ENCODE measurements at regions of chr3 and their contacts with region 1.

Region 1: GRCh38 chr3:107429320-107430181 is 52.3 kb downstream of the CCDC54 start:
- DNase-seq: peak; percentile 87
- H3K4me3 Mint-ChIP-seq: peak overlapping the region; percentile 82
- H3K27ac Mint-ChIP-seq: peak overlapping the region; percentile 45
- H3K4me1 Mint-ChIP-seq: peaks cover 14% of the 10 kb centered on the region
- H3K27me3 Mint-ChIP-seq: peaks cover 51% of the 10 kb centered on the region

Region 2: DNA sequence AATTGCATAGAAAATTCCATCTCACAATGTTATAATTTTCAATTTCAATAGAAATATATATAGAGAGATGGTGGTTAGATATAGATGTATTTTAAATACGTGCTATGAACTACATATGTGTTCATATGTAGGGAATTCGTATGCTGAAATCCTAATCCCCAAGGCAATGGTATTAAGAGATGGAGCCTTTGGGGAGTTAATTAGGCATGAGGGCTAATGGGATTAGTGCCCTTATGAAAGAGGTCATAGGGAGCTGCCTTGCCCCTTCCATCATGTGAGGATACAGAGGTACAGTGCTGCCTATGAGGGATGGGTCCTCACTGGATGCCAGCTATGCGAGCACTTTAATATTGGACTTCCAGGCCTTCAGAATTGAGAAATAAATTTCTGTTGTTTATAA is 132.0 kb before region 1 on chr3:
- intact Hi-C with region 1: no loop called
- DNase-seq: no peak
- H3K4me3 Mint-ChIP-seq: no peak overlapping the region
- H3K27ac Mint-ChIP-seq: no peak overlapping the region
- H3K4me1 Mint-ChIP-seq: no peaks in the 10 kb centered on the region
- H3K27me3 Mint-ChIP-seq: peaks cover 18% of the 10 kb centered on the region

Region 3: GRCh38 chr3:107414325-107414964 is 15.1 kb before region 1 on chr3:
- intact Hi-C with region 1: loop called (anchors 2 kb)
- DNase-seq: no peak
- H3K4me3 Mint-ChIP-seq: no peak overlapping the region
- H3K27ac Mint-ChIP-seq: no peak overlapping the region
- H3K4me1 Mint-ChIP-seq: peaks cover 11% of the 10 kb centered on the region
- H3K27me3 Mint-ChIP-seq: peaks cover 9% of the 10 kb centered on the region

Region 4: DNA sequence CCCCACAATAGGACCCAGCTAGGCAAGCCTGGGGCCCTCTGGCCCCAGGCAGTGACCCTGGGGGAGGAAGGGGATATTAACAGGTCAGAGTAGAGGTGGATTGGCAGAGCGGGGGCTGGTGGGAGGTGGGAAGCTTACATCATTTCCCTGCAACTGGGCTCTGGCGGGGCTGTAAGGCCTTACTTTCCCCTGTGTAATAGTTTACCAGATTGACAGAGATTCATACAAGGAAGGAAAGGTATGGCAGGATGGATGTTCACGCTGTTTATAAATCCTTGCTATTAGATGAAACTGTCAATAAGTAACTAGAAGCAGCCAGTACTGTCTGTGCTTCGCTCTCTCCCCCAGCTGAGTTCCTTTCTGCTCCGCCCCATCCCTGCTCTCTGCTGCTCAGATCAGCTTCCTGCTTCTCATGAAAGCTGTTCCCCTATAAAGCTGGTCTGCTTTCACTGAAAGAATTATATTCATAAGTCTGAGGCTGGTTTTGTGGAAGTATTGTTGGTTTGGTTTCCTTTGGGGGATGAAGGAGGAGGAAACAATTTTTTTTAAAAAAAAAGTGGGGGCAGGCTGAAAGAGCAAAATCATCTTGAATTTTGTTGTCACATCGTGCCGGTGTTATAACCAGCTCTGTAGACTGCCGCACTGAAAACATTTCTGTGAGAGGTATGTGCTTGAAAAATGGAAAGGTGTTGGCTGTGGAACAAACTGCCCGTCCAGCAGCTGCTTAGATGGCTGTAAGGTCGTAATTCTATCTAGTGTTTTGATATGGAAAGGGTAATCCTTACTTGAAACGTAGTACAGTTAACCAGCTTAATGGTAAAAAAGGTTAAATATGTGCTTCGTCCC is 169.6 kb after region 1 on chr3:
- intact Hi-C with region 1: loop called (anchors 10 kb)
- DNase-seq: peak; percentile 84
- H3K4me3 Mint-ChIP-seq: peak overlapping the region; percentile 82
- H3K27ac Mint-ChIP-seq: peak overlapping the region; percentile 78
- H3K4me1 Mint-ChIP-seq: peaks cover 34% of the 10 kb centered on the region
- H3K27me3 Mint-ChIP-seq: no peaks in the 10 kb centered on the region

Region 5: DNA sequence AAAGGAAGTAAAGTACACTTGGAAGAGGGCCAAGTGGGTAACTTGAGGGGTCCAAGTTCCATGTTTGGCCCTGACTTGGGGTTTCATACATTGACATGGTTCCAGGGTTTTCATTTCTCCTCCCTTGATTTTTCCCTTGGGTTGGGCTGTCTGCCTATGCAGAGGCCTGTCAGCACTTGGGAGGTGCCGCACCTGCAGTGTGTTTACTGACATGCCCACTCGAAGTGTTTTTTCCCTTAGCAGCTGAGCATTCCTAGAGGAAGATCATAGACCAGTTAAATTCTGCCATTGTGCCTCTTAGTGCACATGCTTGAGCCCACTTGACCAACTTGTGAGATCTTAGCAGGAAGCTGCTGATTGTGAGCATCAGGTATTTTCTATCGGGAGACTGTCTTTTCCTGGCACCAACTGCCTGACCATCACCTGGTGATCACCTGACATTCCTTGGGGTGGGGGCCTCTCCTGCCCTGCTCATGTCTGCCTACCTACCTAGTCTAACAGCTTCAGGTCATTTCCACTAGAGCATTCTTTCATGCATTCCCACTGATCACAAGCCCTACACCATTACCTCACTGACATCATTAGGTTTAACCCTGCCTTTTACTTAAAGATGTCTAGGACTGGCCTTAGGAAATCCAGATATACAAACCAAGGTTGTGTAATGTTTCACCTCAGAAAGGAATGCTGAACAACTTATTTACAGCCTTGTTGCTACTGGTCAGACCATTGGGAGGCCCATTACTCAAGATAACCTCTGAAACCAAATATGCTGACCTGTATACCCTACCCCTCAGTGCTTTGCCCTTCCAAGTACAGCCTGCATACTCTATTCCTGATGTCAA is 592.9 kb after region 1 on chr3:
- intact Hi-C with region 1: no loop called
- DNase-seq: no peak
- H3K4me3 Mint-ChIP-seq: no peak overlapping the region
- H3K27ac Mint-ChIP-seq: no peak overlapping the region
- H3K4me1 Mint-ChIP-seq: peaks cover 3% of the 10 kb centered on the region
- H3K27me3 Mint-ChIP-seq: peaks cover 4% of the 10 kb centered on the region

Measured in activated CD4-positive, alpha-beta T cell treated with anti-CD3 and anti-CD28 coated beads, Interleukin-2, amount 10 ng/mL, durations not matched to agents 24 days and 14 days (primary cell).